Sciatic nerve (tissue), 2 donors: ENCODE measurements at regions of chr4 and their contacts with region 1.

Region 1: DNA sequence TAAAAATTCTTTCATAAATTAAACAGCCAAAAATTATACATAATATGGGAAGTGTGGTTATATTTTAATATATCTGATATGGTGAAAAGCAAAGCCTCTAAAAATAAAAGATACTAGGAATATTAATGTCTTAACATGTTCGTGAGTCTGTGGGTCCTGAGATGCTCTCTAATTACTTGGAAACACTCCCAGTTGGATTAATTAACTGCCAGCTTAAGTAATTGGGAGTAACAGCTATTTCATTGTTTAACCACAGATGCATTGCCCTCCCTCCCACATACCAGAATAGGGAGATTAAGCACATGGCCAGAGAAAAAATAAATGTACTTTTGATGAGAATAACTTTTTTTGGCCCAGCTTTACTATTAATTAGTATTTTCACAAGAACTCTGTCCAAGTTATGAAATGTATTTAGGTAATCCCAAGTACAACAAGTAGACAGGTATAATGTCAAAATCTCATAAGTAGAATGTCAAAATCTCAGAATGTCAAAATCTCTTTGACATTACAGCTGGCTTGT is 79.7 kb downstream of the BTC start:
- DNase-seq: no peak
- ATAC-seq: no peak

Region 2: DNA sequence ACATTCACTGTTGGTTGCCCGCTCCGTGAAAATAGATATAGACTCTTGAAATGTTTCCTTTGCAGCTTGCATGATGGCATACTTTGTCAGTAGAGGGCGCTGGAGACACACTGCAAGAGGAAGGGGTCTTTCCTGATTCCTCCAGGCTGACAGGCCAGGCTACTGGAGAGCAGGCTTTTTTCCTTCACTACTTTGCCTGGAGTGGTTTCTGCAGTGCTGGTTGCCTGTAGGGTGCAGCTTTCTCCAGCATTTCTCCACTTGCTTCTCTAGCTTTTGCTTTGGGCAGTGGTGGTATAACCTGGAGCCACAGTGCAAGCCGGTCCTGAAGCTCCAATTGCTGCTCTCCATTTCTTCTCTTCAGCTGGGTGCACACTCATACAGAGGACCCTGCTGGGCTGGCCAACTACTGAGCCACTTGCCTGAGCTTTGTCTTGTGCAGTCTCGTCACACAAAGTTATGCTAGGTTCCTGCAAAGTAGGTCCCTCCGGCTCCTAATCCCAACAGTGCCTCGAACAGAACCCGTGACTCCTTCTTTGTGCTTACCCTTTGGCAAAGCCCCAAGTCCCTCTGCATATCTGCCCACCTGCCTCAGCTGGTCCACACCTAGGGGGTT is 1140.8 kb before region 1 on chr4:
- intact Hi-C with region 1: loop called (anchors 5 kb)
- DNase-seq: no peak
- ATAC-seq: peak; percentile 57